Activated naive CD4-positive, alpha-beta T cell treated with anti-CD3 and anti-CD28 coated beads for 36 hours (primary cell): ENCODE measurements at regions of chr1 and their contacts with region 1.

Region 1: GRCh38 chr1:167936068-167936929 is at the start of gene DCAF6:
- DNase-seq: peak; percentile 97
- H3K4me3 Mint-ChIP-seq: peak within 1 kb of the TSS; percentile 85
- H3K27ac Mint-ChIP-seq: peak within 1 kb of the TSS; percentile 100
- H3K4me1 Mint-ChIP-seq: peaks cover 32% of the 10 kb centered on the region
- H3K27me3 Mint-ChIP-seq: no peaks in the 10 kb centered on the region
- total RNA-seq, gene DCAF6: 15.4 to 15.9 TPM

Region 2: DNA sequence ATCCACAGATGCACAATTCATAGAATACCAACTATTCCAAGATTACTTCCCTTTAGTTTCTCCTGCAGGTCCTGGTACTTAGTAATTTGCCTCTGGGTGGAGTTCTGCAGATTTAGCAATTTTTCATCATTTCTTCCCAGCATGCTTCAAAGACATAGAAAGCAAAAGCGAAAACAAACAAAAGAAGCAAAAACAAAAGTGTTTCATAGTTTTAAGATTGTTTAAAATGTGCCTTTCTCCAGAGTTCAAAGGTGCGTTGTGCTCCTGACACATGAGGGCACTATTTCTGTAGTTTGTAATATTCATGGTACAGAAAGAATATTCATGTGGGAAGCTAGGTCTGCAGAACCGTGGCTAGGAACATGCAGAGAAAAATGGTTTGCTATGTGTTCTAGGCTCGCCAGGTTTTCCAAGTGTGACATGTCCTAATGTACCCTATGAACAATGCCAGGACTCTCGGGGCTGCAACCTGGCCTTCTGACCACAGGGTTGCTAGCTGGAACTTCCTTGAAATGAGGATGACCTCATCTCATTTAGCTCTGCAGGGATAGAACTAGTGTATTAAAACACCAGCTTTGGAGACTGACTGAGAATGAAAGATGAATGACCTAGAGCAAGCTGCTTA is 336.2 kb before region 1 on chr1:
- CTCF ChIA-PET with region 1: no interaction called
- intact Hi-C with region 1: loop called (anchors 1 kb)
- DNase-seq: peak; percentile 71
- H3K4me3 Mint-ChIP-seq: peak overlapping the region; percentile 45
- H3K27ac Mint-ChIP-seq: peak overlapping the region; percentile 67
- H3K4me1 Mint-ChIP-seq: peaks cover 39% of the 10 kb centered on the region
- H3K27me3 Mint-ChIP-seq: no peaks in the 10 kb centered on the region

Region 3: DNA sequence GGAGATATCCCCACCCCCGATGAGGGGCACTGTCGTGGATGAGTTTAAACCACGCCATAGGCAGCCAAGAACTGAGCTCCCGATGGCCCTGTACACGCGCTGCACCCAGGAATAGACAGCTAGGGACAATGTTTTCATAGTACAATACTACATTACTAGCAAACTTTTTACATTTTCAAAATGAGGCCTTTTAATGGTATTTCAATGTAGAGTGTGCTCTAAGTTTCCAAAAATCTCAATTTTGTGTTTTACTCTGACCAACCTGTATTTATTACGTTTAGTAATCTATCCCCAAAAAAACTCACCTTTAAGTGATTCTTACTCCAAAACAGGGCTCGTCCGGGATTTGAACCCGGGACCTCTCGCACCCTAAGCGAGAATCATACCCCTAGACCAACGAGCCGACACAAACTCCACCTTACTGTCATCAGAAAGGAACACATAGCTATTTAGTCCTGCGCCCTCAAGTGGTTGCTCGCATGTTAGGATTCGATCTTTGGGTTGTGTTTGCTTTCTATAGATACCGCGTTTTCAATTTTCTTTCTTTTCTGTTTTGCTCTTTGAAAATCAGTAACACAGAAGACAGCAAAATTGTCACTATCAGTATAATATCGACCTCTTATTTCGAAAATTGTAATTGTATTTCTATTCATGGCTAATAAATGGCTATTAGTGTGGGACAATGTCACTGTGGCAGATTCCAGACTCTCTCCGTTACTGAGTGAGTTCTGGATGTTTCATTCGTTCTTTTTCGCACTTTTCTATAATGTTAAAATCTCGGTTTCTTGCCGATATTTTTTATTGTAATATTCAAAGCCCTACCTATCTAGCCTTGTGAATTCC is 220.9 kb before region 1 on chr1:
- CTCF ChIA-PET with region 1: interaction called, 3 read pairs
- intact Hi-C with region 1: loop called (anchors 1 kb)
- DNase-seq: peak; percentile 95
- H3K4me3 Mint-ChIP-seq: peak overlapping the region; percentile 79
- H3K27ac Mint-ChIP-seq: peak overlapping the region; percentile 92
- H3K4me1 Mint-ChIP-seq: peaks cover 28% of the 10 kb centered on the region
- H3K27me3 Mint-ChIP-seq: peaks cover 5% of the 10 kb centered on the region

Region 4: DNA sequence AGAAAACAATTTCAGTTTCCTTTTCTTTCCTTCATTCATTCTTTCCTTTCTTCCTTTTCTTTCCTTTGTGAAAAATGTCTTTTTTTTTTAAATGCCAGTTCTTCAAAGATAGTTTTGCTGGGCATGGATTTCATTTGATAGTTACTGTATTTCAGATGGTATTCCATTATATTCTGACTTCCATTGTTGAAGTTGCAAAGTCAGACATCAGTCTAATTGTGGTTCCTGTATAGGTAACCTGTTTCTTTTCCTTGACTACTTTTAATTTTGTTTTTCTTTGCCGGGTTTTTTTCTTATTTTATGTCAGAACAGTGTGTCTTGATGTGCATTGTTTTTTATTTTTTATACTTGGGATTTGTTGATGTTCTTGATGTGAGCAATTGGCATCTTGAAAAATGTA is 40.9 kb after region 1 on chr1:
- CTCF ChIA-PET with region 1: no interaction called
- intact Hi-C with region 1: no loop called
- DNase-seq: no peak
- H3K4me3 Mint-ChIP-seq: no peak overlapping the region
- H3K27ac Mint-ChIP-seq: no peak overlapping the region
- H3K4me1 Mint-ChIP-seq: no peaks in the 10 kb centered on the region
- H3K27me3 Mint-ChIP-seq: no peaks in the 10 kb centered on the region

Region 5: GRCh38 chr1:168136709-168137514 is 200.6 kb after region 1 on chr1 and contains the start of gene GPR161:
- CTCF ChIA-PET with region 1: no interaction called
- intact Hi-C with region 1: loop called (anchors 2 kb)
- DNase-seq: peak; percentile 37
- H3K4me3 Mint-ChIP-seq: peak within 1 kb of the TSS; percentile 75
- H3K27ac Mint-ChIP-seq: no peak within 1 kb of the TSS
- H3K4me1 Mint-ChIP-seq: peaks cover 39% of the 10 kb centered on the region
- H3K27me3 Mint-ChIP-seq: peaks cover 26% of the 10 kb centered on the region
- total RNA-seq, gene GPR161: 0.12 to 0.29 TPM

Region 6: GRCh38 chr1:168178638-168179437 is 242.5 kb after region 1 on chr1 and contains the start of gene TIPRL:
- CTCF ChIA-PET with region 1: no interaction called
- intact Hi-C with region 1: loop called (anchors 1 kb)
- DNase-seq: peak; percentile 97
- H3K4me3 Mint-ChIP-seq: no peak within 1 kb of the TSS
- H3K27ac Mint-ChIP-seq: no peak within 1 kb of the TSS
- H3K4me1 Mint-ChIP-seq: peaks cover 7% of the 10 kb centered on the region
- H3K27me3 Mint-ChIP-seq: peaks cover 2% of the 10 kb centered on the region
- total RNA-seq, gene TIPRL: 76.7 to 81.3 TPM

Region 7: GRCh38 chr1:168225476-168226190 is 289.3 kb after region 1 on chr1 and contains the start of gene SFT2D2:
- CTCF ChIA-PET with region 1: no interaction called
- intact Hi-C with region 1: loop called (anchors 2 kb)
- DNase-seq: peak; percentile 77
- H3K4me3 Mint-ChIP-seq: peak within 1 kb of the TSS; percentile 92
- H3K27ac Mint-ChIP-seq: peak within 1 kb of the TSS; percentile 80
- H3K4me1 Mint-ChIP-seq: peaks cover 46% of the 10 kb centered on the region
- H3K27me3 Mint-ChIP-seq: peaks cover 2% of the 10 kb centered on the region
- total RNA-seq, gene SFT2D2: 33.1 to 35.3 TPM

Region 8: DNA sequence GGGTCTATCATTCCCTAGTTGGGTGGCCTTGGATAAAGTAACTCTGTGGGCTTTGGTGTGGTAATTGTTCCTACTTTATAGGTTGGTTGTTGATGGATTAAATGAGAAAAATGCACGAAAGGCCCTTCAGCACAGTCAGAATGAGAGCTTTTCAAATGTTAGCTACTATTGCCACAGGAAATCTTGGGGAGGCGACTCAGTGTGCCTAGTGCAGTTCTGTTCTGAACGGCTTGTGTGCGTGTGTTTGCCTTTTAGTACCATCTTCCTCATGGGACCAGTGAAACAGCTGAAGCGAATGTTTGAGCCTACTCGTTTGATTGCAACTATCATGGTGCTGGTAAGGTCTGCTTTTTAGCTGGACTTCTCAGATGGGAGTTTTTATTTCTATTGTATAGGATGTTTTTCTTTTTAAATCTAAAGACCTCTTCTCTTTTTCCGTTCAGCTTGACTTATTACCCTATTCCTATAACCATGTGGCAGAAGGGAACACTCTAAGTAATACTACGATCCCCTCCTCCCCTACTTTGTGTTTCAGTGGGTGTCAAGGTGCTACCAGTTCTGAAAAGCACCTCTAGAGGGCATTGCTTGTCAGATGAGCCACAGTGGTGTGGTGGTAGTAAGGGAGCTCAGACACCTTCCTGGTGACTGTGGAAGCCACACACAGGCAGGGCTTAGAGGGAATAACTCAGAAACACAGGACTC is 298.7 kb after region 1 on chr1:
- CTCF ChIA-PET with region 1: no interaction called
- intact Hi-C with region 1: loop called (anchors 2 kb)
- DNase-seq: peak; percentile 53
- H3K4me3 Mint-ChIP-seq: no peak overlapping the region
- H3K27ac Mint-ChIP-seq: peak overlapping the region; percentile 48
- H3K4me1 Mint-ChIP-seq: peaks cover 41% of the 10 kb centered on the region
- H3K27me3 Mint-ChIP-seq: no peaks in the 10 kb centered on the region